ENCODE measurements at regions of chr22 and their contacts with region 1.

Region 1: DNA sequence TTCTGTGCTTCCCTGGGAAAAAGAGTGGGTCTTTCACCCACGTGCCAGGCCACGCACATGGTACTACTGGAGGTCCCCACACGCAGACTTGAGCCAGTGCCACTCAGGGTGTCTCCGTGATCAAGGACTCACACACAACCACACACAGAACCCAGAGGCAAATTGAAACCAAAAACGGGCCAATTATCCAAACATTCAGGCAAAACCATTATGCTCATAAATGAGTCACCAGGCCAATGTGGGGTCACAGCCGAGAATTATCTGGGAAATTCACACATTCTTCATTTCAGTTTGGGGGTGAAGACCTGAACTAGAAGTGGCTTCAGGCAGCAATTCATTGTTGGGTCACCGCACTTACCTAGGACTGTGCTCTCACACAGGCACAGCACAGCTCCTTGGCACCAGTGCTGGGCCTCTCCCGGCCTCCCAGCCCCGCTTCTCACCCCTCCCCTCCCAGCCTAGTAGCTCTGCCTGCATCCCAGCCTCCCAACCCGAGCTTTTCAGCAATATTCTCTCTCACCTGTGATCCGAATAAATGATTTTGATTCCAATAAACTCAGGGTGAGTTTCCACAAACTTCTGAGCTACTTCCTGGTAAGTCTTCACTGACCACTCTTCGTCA is 28.0 kb downstream of the ADA2 start:
- DNase-seq: no peak
- ATAC-seq: no peak
- H3K4me3 ChIP-seq: no peak overlapping the region
- H3K27ac ChIP-seq: no peak overlapping the region
- H3K4me1 ChIP-seq: no peaks in the 10 kb centered on the region
- H3K27me3 ChIP-seq: no peaks in the 10 kb centered on the region
- CTCF ChIP-seq: no peak

Region 2: GRCh38 chr22:17135153-17135760 is 56.0 kb before region 1 on chr22:
- CTCF ChIA-PET with region 1: interaction called, 10 read pairs
- POLR2A ChIA-PET with region 1: no interaction called
- in situ Hi-C with region 1: no loop called
- intact Hi-C with region 1: no loop called
- DNase-seq: no peak
- ATAC-seq: no peak
- H3K4me3 ChIP-seq: no peak overlapping the region
- H3K27ac ChIP-seq: no peak overlapping the region
- H3K4me1 ChIP-seq: no peaks in the 10 kb centered on the region
- H3K27me3 ChIP-seq: no peaks in the 10 kb centered on the region
- CTCF ChIP-seq: no peak

Region 3: DNA sequence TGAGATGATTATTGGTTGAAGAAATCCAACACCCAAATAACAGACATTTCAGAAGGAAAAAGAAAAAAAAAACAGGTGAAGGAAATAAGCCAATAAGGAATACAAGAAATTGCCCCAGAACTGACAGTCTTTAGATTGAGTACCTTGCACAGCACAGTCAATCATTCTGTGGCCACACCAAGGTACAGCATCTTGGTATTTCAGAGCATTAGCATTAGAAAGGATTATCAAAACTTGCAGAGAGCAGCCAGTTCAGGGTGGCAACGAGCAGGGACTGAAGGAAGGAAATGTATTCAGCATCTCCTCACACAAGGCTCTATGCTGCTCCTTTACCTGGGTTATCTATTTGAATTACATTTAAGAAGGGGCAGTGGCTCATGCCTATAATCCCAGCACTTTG is 25.9 kb after region 1 on chr22:
- CTCF ChIA-PET with region 1: no interaction called
- POLR2A ChIA-PET with region 1: interaction called, 14 read pairs
- in situ Hi-C with region 1: no loop called
- intact Hi-C with region 1: no loop called
- DNase-seq: no peak
- ATAC-seq: no peak
- H3K4me3 ChIP-seq: no peak overlapping the region
- H3K27ac ChIP-seq: no peak overlapping the region
- H3K4me1 ChIP-seq: no peaks in the 10 kb centered on the region
- H3K27me3 ChIP-seq: no peaks in the 10 kb centered on the region
- CTCF ChIP-seq: no peak

Region 4: DNA sequence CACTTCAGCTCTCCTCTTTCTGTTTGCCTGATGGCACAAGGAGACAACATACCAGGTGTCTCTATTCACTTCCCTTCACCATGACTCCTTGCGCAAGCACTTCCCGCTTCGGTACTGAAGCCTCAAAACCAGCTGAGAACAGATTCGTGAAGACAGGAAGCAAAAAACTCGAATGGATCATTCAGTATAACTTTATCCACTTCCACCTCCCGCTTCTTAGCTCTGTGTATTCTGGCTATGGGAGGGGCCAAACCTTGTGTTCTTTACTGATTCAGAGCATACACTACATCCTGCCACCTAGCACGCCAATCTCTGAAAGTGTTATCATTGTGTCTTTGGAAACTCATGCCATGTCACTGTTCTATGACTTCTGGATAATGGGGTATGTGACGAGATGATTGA is 90.2 kb after region 1 on chr22:
- CTCF ChIA-PET with region 1: no interaction called
- POLR2A ChIA-PET with region 1: no interaction called
- in situ Hi-C with region 1: no loop called
- intact Hi-C with region 1: no loop called
- DNase-seq: no peak
- ATAC-seq: no peak
- H3K4me3 ChIP-seq: no peak overlapping the region
- H3K27ac ChIP-seq: no peak overlapping the region
- H3K4me1 ChIP-seq: no peaks in the 10 kb centered on the region
- H3K27me3 ChIP-seq: no peaks in the 10 kb centered on the region
- CTCF ChIP-seq: no peak

Region 5: DNA sequence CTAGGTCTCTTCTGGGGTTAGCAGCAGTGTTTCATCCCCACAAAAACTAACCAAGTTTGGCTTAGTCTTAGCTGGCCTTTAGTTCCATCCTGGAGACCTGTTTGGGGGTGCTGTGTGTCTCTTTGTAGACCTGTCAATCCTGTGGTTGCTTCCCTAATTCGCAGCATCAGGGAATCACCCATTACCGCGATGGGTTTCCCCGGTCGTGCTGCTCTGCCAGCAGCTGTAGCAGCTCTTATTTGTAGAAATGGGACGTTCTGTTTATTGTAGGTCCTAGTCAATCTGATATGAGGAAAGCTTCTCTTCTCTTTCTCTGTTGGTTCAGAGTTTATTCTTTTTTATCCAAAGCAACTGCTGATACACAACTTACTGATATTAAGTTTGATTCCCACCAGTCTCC is 269.6 kb after region 1 on chr22:
- CTCF ChIA-PET with region 1: no interaction called
- POLR2A ChIA-PET with region 1: no interaction called
- in situ Hi-C with region 1: no loop called
- intact Hi-C with region 1: no loop called
- DNase-seq: no peak
- ATAC-seq: no peak
- H3K4me3 ChIP-seq: no peak overlapping the region
- H3K27ac ChIP-seq: no peak overlapping the region
- H3K4me1 ChIP-seq: no peaks in the 10 kb centered on the region
- H3K27me3 ChIP-seq: no peaks in the 10 kb centered on the region
- CTCF ChIP-seq: no peak

Region 6: GRCh38 chr22:17566776-17567175 is 375.5 kb after region 1 on chr22:
- CTCF ChIA-PET with region 1: no interaction called
- POLR2A ChIA-PET with region 1: interaction called, 14 read pairs
- in situ Hi-C with region 1: no loop called
- intact Hi-C with region 1: no loop called
- DNase-seq: no peak
- ATAC-seq: no peak
- H3K4me3 ChIP-seq: no peak overlapping the region
- H3K27ac ChIP-seq: no peak overlapping the region
- H3K4me1 ChIP-seq: peaks cover 20% of the 10 kb centered on the region
- H3K27me3 ChIP-seq: no peaks in the 10 kb centered on the region
- CTCF ChIP-seq: no peak